Activated T-helper 2 cell treated with anti-CD3 and anti-CD28 coated beads, Interferon-gamma antibody, Interleukin-2, Interleukin-4, amounts not matched to agents 10 μg/mL and 5 μg/mL and 100 μg/mL, durations not matched to agents 14 hours and 24 hours and 36 hours (primary cell): ENCODE measurements at regions of chr6 and their contacts with region 1.

Region 1: GRCh38 chr6:96521644-96522464 is at the start of gene UFL1:
- DNase-seq: peak; percentile 90
- H3K4me3 Mint-ChIP-seq: peak within 1 kb of the TSS; percentile 99
- H3K27ac Mint-ChIP-seq: peak within 1 kb of the TSS; percentile 99
- H3K4me1 Mint-ChIP-seq: peaks cover 12% of the 10 kb centered on the region
- H3K27me3 Mint-ChIP-seq: no peaks in the 10 kb centered on the region
- total RNA-seq, gene UFL1: 27.0 and 27.3 TPM in 2 replicates

Region 2: DNA sequence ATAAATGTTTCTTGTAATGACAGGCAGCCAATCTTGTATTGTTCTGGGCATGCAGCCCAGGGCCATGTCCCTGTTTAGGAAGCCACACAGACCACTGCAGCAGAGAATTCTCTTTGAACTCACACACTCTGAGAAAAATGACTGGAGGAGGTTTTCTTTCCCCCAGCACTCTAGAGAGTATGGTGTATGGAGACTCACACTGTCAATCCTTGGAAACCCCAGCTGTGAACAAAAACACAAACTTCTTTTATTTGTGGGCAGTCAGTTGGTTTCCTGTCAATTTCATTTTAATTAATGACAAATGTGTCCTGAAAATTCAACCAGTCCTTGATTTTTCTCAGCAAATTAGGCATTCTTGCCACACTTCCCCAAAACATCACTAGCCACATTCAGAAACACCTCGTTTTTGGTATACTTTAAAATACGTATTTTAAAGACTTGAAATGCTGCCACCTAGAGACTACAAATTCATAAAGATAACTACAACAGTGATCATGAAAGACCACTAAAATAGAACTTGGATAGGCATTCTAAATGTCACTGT is 53.1 kb before region 1 on chr6:
- intact Hi-C with region 1: loop called (anchors 1 kb)
- DNase-seq: no peak
- H3K4me3 Mint-ChIP-seq: no peak overlapping the region
- H3K27ac Mint-ChIP-seq: no peak overlapping the region
- H3K4me1 Mint-ChIP-seq: peaks cover 36% of the 10 kb centered on the region
- H3K27me3 Mint-ChIP-seq: peaks cover 21% of the 10 kb centered on the region

Region 3: GRCh38 chr6:96547654-96548053 is 25.8 kb after region 1 on chr6:
- intact Hi-C with region 1: no loop called
- DNase-seq: no peak
- H3K4me3 Mint-ChIP-seq: no peak overlapping the region
- H3K27ac Mint-ChIP-seq: no peak overlapping the region
- H3K4me1 Mint-ChIP-seq: no peaks in the 10 kb centered on the region
- H3K27me3 Mint-ChIP-seq: no peaks in the 10 kb centered on the region

Region 4: GRCh38 chr6:96837081-96837971 is 315.5 kb after region 1 on chr6 and contains the start of gene GPR63:
- intact Hi-C with region 1: loop called (anchors 2 kb)
- DNase-seq: peak; percentile 84
- H3K4me3 Mint-ChIP-seq: peak within 1 kb of the TSS; percentile 90
- H3K27ac Mint-ChIP-seq: peak within 1 kb of the TSS; percentile 43
- H3K4me1 Mint-ChIP-seq: peaks cover 34% of the 10 kb centered on the region
- H3K27me3 Mint-ChIP-seq: peaks cover 24% of the 10 kb centered on the region
- total RNA-seq, gene GPR63: 4.5 and 5.0 TPM in 2 replicates

Region 5: DNA sequence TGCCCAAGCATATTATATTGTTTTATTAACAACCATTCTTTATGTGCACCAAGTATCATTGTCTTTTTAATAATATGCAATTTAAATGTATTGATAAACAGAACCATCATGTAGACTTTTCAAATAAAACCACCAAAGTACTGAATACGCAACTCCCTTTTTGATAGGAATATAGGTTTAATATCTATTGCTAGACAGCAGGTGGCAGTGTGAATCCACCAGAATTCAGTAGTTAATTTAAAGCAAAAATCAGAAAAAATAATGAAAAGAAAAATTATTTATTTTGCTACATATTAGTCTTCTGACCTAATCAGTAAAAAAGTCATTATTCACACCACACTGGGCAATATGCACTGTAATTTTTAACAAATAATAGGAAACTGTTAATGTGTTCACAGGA is 546.4 kb after region 1 on chr6:
- intact Hi-C with region 1: loop called (anchors 5 kb)
- DNase-seq: no peak
- H3K4me3 Mint-ChIP-seq: no peak overlapping the region
- H3K27ac Mint-ChIP-seq: no peak overlapping the region
- H3K4me1 Mint-ChIP-seq: peaks cover 10% of the 10 kb centered on the region
- H3K27me3 Mint-ChIP-seq: no peaks in the 10 kb centered on the region